Transverse colon (tissue), 4 donors: ENCODE measurements at regions of chr16 and their contacts with region 1.

Region 1: DNA sequence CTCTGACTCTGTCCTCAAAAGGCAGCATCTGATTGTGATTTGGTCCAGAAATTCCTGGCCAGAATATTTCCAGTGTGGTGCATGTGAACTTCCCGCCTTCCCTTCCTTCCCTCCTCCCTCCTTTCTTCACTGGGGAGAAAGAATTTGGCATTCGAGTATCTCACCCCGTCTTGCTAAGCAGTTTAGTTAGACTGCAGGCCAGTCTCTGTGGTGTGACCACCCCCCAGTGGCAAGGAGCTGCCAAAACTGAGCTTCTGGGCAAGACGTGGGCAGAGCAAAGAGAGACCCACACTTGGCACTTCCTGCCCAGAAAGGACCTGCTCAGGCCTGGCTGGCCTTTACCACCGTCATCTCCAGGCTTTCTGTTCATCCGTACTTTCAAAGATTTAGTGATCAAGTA is 36.4 kb downstream of the SNX20 start:
- DNase-seq: peak; percentile 26
- H3K4me3 ChIP-seq: no peak overlapping the region
- H3K27ac ChIP-seq: no peak overlapping the region
- H3K4me1 ChIP-seq: no peaks in the 10 kb centered on the region
- H3K27me3 ChIP-seq: no peaks in the 10 kb centered on the region
- CTCF ChIP-seq: peak in 3 of 5 experiments; percentile 11 to 32 (median 18)
- EP300 ChIP-seq: no peak
- POLR2A ChIP-seq: no peak

Region 2: GRCh38 chr16:50093607-50094539 is 550.9 kb before region 1 on chr16:
- in situ Hi-C with region 1: no loop called
- intact Hi-C with region 1: no loop called
- DNase-seq: peak; percentile 34
- H3K4me3 ChIP-seq: no peak overlapping the region
- H3K27ac ChIP-seq: peak overlapping the region; percentile 28 to 57 (median 37)
- H3K4me1 ChIP-seq: no peaks in the 10 kb centered on the region
- H3K27me3 ChIP-seq: no peaks in the 10 kb centered on the region
- CTCF ChIP-seq: no peak
- EP300 ChIP-seq: no peak
- POLR2A ChIP-seq: no peak

Region 3: GRCh38 chr16:50381679-50382440 is 262.9 kb before region 1 on chr16:
- in situ Hi-C with region 1: no loop called
- intact Hi-C with region 1: loop called (anchors 5 kb)
- DNase-seq: no peak
- H3K4me3 ChIP-seq: no peak overlapping the region
- H3K27ac ChIP-seq: no peak overlapping the region
- H3K4me1 ChIP-seq: no peaks in the 10 kb centered on the region
- H3K27me3 ChIP-seq: no peaks in the 10 kb centered on the region
- CTCF ChIP-seq: no peak
- EP300 ChIP-seq: no peak
- POLR2A ChIP-seq: no peak

Region 4: GRCh38 chr16:50530277-50531236 is 114.2 kb before region 1 on chr16:
- in situ Hi-C with region 1: no loop called
- intact Hi-C with region 1: no loop called
- DNase-seq: no peak
- H3K4me3 ChIP-seq: no peak overlapping the region
- H3K27ac ChIP-seq: no peak overlapping the region
- H3K4me1 ChIP-seq: no peaks in the 10 kb centered on the region
- H3K27me3 ChIP-seq: no peaks in the 10 kb centered on the region
- CTCF ChIP-seq: no peak
- EP300 ChIP-seq: no peak
- POLR2A ChIP-seq: no peak